Endothelial cell of umbilical vein (primary cell): ENCODE measurements at regions of chr4 and their contacts with region 1.

Region 1: GRCh38 chr4:142405021-142405694 is 440.9 kb downstream of the INPP4B start:
- DNase-seq: peak; percentile 75
- H3K4me3 ChIP-seq: peak overlapping the region; percentile 29 to 83 (median 57)
- H3K27ac ChIP-seq: peak overlapping the region; percentile 77
- H3K4me1 ChIP-seq: peaks cover 44% of the 10 kb centered on the region
- H3K27me3 ChIP-seq: no peaks in the 10 kb centered on the region
- CTCF ChIP-seq: no peak
- POLR2A ChIP-seq: no peak

Region 2: DNA sequence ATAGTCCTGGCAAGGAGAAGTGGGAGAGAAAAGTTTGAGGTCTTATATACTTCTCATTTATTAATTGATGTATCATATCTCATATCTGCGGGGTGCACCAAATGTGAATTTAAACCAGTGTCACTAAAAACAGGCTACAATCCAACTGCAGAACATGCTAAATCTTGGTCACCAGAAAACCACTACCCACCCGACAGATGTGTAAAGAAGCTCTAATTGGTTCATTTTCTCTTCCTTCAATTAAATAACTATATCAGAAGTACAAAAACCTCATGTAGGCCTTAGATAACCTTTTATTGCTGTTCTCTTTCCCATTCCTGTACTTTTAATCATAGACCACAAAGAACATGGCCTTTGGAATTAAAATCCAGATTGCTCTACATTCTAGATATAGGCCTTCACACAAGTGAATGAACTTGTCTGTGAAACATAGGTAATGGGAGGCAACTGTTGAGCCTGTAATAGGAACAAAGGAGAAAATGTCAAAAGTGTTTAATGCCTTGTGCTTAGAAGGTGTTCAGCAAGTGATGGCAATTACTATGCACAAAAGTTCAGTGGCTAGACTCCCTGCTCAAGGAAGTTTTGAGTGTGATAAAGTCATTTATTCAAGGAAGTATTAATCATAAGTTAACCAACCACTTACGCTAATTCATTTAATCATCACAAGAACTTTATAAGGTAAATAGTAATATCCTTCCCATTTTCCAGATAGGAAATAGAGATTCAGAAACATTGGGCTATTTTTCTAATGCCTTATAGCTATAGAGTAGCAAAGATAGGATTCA is 15.3 kb after region 1 on chr4:
- CTCF ChIA-PET with region 1: interaction called, 6 read pairs
- POLR2A ChIA-PET with region 1: no interaction called
- dilution Hi-C with region 1: no loop called
- intact Hi-C with region 1: loop called (anchors 2 kb)
- DNase-seq: peak; percentile 55
- H3K4me3 ChIP-seq: no peak overlapping the region
- H3K27ac ChIP-seq: no peak overlapping the region
- H3K4me1 ChIP-seq: peaks cover 18% of the 10 kb centered on the region
- H3K27me3 ChIP-seq: no peaks in the 10 kb centered on the region
- CTCF ChIP-seq: no peak
- POLR2A ChIP-seq: no peak

Region 3: DNA sequence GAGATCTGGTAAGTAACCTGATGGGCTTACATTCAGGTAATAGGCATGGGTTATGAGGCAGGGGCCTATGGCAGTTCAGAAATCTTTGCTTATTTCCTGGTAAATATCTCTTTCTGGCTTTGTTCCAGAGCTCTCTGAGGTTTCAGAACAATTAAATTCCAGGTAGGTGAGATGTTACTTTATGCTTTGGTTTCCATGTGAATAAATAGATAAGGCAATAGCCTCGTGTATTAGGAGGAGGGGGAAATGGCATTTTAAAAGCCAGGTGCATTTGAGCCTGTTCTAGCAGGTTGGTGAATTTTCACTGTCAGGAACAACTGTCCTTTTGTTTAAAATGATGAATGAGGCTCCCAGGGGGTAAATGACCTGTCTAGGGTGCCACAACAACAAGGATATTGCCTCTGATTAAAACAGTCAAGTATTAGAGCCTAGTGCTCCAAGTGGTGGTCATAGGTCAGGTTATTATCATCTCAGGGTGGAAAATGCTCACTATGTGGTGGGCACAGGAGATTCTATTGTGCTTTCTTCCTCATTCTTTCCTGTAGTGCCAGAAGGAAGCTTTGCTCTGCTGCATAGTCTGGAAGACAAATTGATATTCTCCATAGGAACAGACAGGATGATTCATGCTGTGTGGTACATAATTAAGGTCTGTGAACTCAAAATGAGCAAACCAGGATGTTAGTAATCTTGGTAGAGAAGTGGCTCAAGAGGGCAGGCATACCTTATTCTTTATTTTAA is 144.7 kb after region 1 on chr4:
- CTCF ChIA-PET with region 1: no interaction called
- POLR2A ChIA-PET with region 1: no interaction called
- dilution Hi-C with region 1: no loop called
- intact Hi-C with region 1: loop called (anchors 1 kb)
- DNase-seq: peak; percentile 88
- H3K4me3 ChIP-seq: no peak overlapping the region
- H3K27ac ChIP-seq: peak overlapping the region; percentile 78
- H3K4me1 ChIP-seq: peaks cover 12% of the 10 kb centered on the region
- H3K27me3 ChIP-seq: no peaks in the 10 kb centered on the region
- CTCF ChIP-seq: no peak
- POLR2A ChIP-seq: no peak